Right lobe of liver (tissue), 6 donors: ENCODE measurements at regions of chr1 and their contacts with region 1.

Region 1: GRCh38 chr1:24909388-24909898 is 20.6 kb downstream of the RUNX3 start:
- DNase-seq: peak in 2 of 3 donors; percentile 62 to 72
- ATAC-seq: peak; percentile 67 to 83 (median 70)
- H3K4me3 ChIP-seq: no peak overlapping the region
- H3K27ac ChIP-seq: no peak overlapping the region
- H3K4me1 ChIP-seq: no peaks in the 10 kb centered on the region
- H3K27me3 ChIP-seq: no peaks in the 10 kb centered on the region
- CTCF ChIP-seq: peak; percentile 40 to 54 (median 41)
- POLR2A ChIP-seq: no peak

Region 2: GRCh38 chr1:24847995-24848881 is 61.2 kb before region 1 on chr1:
- intact Hi-C with region 1: loop called in 1 of 2 experiments (anchors 10 kb)
- DNase-seq: peak; percentile 93 to 95 (median 95)
- ATAC-seq: peak; percentile 92 to 96 (median 94)
- H3K4me3 ChIP-seq: peak overlapping the region; percentile 40 to 50 (median 49)
- H3K27ac ChIP-seq: peak overlapping the region; percentile 27 to 62 (median 44)
- H3K4me1 ChIP-seq: peaks cover 0 to 17% (median 4%) of the 10 kb centered on the region in 4 donors
- H3K27me3 ChIP-seq: no peaks in the 10 kb centered on the region
- CTCF ChIP-seq: peak; percentile 93 to 97 (median 94)
- POLR2A ChIP-seq: peak; percentile 23